ENCODE measurements at regions of chr1 and their contacts with region 1.

Region 1: DNA sequence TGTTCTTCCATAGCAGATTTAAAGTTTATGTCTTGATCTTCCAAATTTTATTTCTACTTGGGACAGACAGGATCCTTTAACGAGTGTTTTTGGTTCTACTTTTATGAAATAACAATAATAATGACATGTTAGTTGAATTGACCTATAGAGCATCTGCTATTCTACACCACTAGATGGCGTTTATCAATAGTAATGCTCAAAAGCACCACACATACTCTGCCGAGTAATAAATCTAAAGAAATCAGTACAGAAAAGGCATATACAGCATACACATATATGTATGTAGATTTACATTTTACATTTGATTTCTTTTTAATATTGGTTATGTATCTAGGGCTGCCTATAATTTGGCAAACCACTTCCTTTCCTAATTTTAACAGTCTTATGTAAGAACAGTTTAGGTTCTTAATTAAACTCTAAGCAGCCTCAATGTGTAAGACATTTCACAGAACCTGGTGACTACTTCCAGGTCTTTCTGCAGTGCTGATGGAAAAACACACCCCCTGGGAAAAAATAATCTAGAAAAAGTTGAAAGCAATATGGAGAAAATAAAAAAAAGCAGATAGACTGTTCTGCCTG is 5.9 kb upstream of the SIPA1L2 start:
- DNase-seq: no peak
- ATAC-seq: peak; percentile 34 to 72 (median 60)
- H3K4me3 ChIP-seq: no peak overlapping the region
- H3K27ac ChIP-seq: no peak overlapping the region
- H3K4me1 ChIP-seq: peaks cover 0 to 12% (median 3%) of the 10 kb centered on the region in 12 donors
- H3K27me3 ChIP-seq: no peaks in the 10 kb centered on the region
- CTCF ChIP-seq: peak; percentile 69 to 91 (median 83)
- POLR2A ChIP-seq: no peak

Region 2: DNA sequence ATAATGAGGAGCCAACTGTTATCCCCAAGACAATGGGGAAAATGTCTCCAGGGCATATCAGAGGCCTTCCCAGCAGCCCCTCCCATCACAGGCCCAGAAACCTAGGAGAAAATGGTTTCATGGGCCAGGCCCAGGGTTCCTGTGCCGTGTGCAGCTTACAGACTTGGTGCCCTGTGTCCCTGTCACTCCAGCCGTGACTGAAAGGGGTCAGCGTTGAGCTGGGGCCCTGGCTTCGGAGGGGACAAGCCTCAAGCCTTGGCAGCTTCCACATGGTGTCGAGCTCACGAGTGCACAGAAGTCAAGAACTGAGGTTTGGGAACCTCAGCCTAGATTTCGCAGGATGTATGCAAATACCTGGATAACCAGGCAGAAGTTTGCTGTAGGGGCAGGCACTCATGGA is 24.0 kb before region 1 on chr1:
- intact Hi-C with region 1: no loop called
- DNase-seq: no peak
- ATAC-seq: peak in 1 of 4 donors; percentile 23
- H3K4me3 ChIP-seq: no peak overlapping the region
- H3K27ac ChIP-seq: peak overlapping the region in 1 of 12 donors; percentile 80
- H3K4me1 ChIP-seq: peaks cover 0 to 67% (median 38%) of the 10 kb centered on the region in 12 donors
- H3K27me3 ChIP-seq: no peaks in the 10 kb centered on the region
- CTCF ChIP-seq: peak in 1 of 12 donors; percentile 4
- POLR2A ChIP-seq: no peak

Region 3: DNA sequence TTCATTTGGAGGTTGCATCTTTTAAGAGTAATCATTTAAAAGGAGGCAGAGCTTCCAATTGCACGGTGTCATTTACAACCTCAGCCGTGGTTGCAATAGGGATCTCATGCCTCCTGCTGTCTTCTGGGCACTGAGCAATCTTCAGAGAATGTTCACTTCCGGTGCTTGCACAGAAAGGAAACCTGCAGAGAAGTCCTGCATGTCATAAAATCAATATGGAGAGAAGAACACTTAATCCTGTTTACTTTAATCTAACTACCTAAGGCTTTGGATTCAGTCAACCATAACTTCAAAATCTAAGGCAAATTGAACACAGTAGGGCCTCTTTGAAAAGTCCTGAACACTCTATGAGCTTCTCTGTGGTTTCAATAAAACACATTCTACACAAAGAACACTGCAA is 158.1 kb after region 1 on chr1:
- intact Hi-C with region 1: loop called in 2 of 10 experiments (anchors 5 to 10 kb)
- DNase-seq: no peak
- ATAC-seq: no peak
- H3K4me3 ChIP-seq: no peak overlapping the region
- H3K27ac ChIP-seq: no peak overlapping the region
- H3K4me1 ChIP-seq: peaks cover 0 to 37% (median 3%) of the 10 kb centered on the region in 12 donors
- H3K27me3 ChIP-seq: no peaks in the 10 kb centered on the region
- CTCF ChIP-seq: no peak
- POLR2A ChIP-seq: no peak

Region 4: DNA sequence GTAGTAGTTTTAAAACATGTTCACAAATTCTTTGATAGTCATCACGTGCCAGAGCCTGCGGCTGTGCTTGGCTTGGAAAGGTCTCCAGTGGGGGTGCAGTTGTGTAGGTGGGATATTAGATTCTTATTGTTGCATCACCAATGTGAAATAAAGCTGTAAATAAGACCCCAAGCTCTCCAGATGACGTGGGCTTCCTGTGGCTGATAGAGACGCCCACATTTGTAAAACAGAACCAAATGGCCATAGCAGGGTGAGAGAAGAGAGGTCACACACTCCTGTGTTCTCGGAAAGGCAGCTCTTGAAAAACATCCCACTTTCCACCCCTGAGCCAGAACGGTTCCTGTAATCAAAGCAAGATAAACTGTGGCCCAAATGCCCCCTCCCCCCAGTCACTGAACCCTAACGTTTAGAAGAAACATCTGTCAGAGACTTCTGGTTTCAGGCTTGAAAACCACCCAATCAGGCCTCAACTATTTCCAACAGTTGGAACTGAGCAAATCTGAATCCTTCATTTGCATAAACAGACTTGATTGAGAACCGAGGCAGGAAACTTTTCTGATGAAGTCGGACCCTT is 307.9 kb after region 1 on chr1:
- intact Hi-C with region 1: loop called in 3 of 10 experiments (anchors 2 to 5 kb)
- DNase-seq: no peak
- ATAC-seq: peak in 1 of 4 donors; percentile 30
- H3K4me3 ChIP-seq: no peak overlapping the region
- H3K27ac ChIP-seq: no peak overlapping the region
- H3K4me1 ChIP-seq: peaks cover 0 to 10% (median 0%) of the 10 kb centered on the region in 12 donors
- H3K27me3 ChIP-seq: peaks cover 0 to 5% (median 0%) of the 10 kb centered on the region in 9 donors
- CTCF ChIP-seq: no peak
- POLR2A ChIP-seq: no peak

Region 5: GRCh38 chr1:232968965-232969364 is 333.1 kb after region 1 on chr1:
- intact Hi-C with region 1: loop called in 3 of 10 experiments (anchors 5 to 10 kb)
- DNase-seq: peak in 3 of 5 donors; percentile 51 to 79 (median 65)
- ATAC-seq: peak in 3 of 4 donors; percentile 83 to 89 (median 87)
- H3K4me3 ChIP-seq: no peak overlapping the region
- H3K27ac ChIP-seq: peak overlapping the region in 1 of 12 donors; percentile 2
- H3K4me1 ChIP-seq: peaks cover 0 to 49% (median 20%) of the 10 kb centered on the region in 12 donors
- H3K27me3 ChIP-seq: no peaks in the 10 kb centered on the region
- CTCF ChIP-seq: no peak
- POLR2A ChIP-seq: no peak

Region 6: GRCh38 chr1:233172227-233172626 is 536.4 kb after region 1 on chr1:
- intact Hi-C with region 1: loop called (anchors 2 to 5 kb)
- DNase-seq: no peak
- ATAC-seq: peak in 3 of 4 donors; percentile 45 to 60 (median 56)
- H3K4me3 ChIP-seq: no peak overlapping the region
- H3K27ac ChIP-seq: no peak overlapping the region
- H3K4me1 ChIP-seq: no peaks in the 10 kb centered on the region
- H3K27me3 ChIP-seq: no peaks in the 10 kb centered on the region
- CTCF ChIP-seq: peak; percentile 24 to 64 (median 50)
- POLR2A ChIP-seq: no peak

Region 7: GRCh38 chr1:233252441-233252840 is 616.6 kb after region 1 on chr1:
- intact Hi-C with region 1: no loop called
- DNase-seq: peak in 2 of 5 donors; percentile 15 to 36
- ATAC-seq: no peak
- H3K4me3 ChIP-seq: no peak overlapping the region
- H3K27ac ChIP-seq: peak overlapping the region in 1 of 12 donors; percentile 11
- H3K4me1 ChIP-seq: peaks cover 0 to 12% (median 0%) of the 10 kb centered on the region in 12 donors
- H3K27me3 ChIP-seq: no peaks in the 10 kb centered on the region
- CTCF ChIP-seq: no peak
- POLR2A ChIP-seq: no peak

Measured in heart left ventricle (tissue), 16 donors.